ENCODE measurements at regions of chr2 and their contacts with region 1.

Region 1: DNA sequence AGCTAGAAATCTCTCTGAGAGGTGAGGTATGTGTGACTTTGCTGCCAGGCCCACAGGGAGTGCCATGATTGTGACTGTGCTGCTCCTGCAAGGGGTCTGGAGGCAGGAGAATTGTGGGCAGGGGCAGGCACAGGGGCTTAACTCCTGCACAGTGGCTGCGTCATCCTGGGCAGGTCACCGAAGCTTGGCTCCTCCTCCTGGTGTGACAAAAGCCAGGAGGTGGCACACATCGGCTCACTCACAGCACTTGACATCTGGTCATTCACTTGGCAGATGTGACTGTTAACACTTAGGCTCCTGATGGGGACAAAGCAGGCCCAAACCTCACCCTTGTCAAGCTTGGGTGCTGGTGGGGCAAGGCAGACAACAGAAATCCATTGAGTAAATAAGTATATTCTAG is 36.4 kb upstream of the GLI2 start:
- DNase-seq: no peak
- H3K4me3 ChIP-seq: no peak overlapping the region
- H3K27ac ChIP-seq: no peak overlapping the region
- H3K4me1 ChIP-seq: no peaks in the 10 kb centered on the region
- H3K27me3 ChIP-seq: peaks cover 10% of the 10 kb centered on the region
- CTCF ChIP-seq: no peak

Region 2: DNA sequence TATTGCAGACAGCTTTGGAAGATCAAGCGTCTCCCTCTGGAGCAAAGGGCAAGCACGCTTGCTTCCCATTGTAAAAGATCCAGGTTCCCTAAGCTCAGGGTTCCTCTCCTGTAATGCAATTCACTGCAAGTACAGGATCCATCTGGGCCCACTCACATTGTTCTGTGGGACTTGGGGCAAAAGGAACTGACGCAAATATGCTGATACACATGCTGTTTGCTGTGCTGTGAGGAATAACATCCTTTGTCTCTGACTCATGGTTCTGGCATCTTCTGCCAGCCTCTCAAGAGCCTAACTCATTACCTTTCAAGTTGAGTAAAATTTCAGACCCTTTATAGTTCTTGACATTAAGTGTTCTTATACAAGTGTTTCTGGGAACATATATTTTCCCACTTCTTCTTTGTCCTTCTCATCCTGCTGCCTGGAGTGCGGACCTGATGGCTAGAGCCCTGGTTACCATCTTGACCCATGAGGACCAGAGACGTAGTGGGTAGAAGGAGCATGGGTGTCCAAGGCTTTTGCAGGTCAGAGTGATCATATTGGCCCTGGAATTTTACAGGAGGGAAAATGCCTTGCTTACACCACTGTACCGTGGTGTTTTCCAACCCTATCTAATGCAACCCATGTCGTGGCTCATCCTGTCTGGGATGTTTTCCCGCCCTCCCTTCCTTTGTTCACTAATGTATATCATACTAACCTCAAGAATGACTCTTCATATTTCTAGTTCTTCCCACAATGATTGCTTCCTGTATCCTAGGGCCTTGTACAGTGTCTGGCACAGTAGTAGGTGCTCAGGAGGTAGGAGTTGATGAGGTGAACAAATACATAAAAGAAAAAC is 109.3 kb before region 1 on chr2:
- CTCF ChIA-PET with region 1: no interaction called
- POLR2A ChIA-PET with region 1: no interaction called
- intact Hi-C with region 1: no loop called
- DNase-seq: no peak
- H3K4me3 ChIP-seq: no peak overlapping the region
- H3K27ac ChIP-seq: no peak overlapping the region
- H3K4me1 ChIP-seq: no peaks in the 10 kb centered on the region
- H3K27me3 ChIP-seq: peaks cover 34% of the 10 kb centered on the region
- CTCF ChIP-seq: no peak

Region 3: GRCh38 chr2:120958623-120959366 is 259.5 kb after region 1 on chr2:
- CTCF ChIA-PET with region 1: no interaction called
- POLR2A ChIA-PET with region 1: no interaction called
- intact Hi-C with region 1: loop called (anchors 5 kb)
- DNase-seq: peak; percentile 45
- H3K4me3 ChIP-seq: no peak overlapping the region
- H3K27ac ChIP-seq: no peak overlapping the region
- H3K4me1 ChIP-seq: no peaks in the 10 kb centered on the region
- H3K27me3 ChIP-seq: no peaks in the 10 kb centered on the region
- CTCF ChIP-seq: peak; percentile 54

Region 4: DNA sequence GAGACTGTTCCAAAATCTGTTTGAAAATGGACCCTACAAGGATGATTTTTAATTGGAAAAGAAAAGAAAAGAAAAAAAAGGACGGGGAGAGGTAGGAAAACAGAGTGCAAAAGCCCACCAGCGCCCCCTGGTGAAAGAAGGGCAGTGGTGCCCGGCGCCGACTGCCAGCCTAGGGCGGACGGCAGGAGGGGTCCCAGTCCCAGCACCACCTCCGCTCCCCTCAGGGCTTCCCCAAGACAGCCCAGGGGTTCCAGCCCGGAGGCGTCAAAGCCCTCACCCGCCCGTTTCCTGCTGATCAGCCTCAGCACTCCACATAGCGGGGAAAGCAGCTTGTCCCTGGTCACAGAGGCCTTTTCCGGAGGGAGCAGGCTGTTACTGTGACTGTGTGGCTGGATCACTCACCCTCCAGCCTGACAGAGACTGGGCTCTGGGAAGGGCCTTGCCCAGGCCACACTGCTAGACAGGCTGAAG is 371.8 kb after region 1 on chr2:
- CTCF ChIA-PET with region 1: interaction called, 10 read pairs
- POLR2A ChIA-PET with region 1: no interaction called
- intact Hi-C with region 1: loop called (anchors 1 kb)
- DNase-seq: peak; percentile 68
- H3K4me3 ChIP-seq: no peak overlapping the region
- H3K27ac ChIP-seq: no peak overlapping the region
- H3K4me1 ChIP-seq: peaks cover 5% of the 10 kb centered on the region
- H3K27me3 ChIP-seq: no peaks in the 10 kb centered on the region
- CTCF ChIP-seq: peak; percentile 93

Measured in A673 (cell line).